Panc1 (cell line): ENCODE measurements at regions of chr11 and their contacts with region 1.

Region 1: GRCh38 chr11:93080146-93080759 is 110.8 kb downstream of the MTNR1B start:
- DNase-seq: no peak
- ATAC-seq: no peak
- H3K4me3 ChIP-seq: no peak overlapping the region
- H3K27ac ChIP-seq: no peak overlapping the region
- H3K4me1 ChIP-seq: no peaks in the 10 kb centered on the region
- H3K27me3 ChIP-seq: 0 out of 2 replicates have a peak, but pooled peaks cover 4% of the 10 kb centered on the region
- CTCF ChIP-seq: no peak

Region 2: DNA sequence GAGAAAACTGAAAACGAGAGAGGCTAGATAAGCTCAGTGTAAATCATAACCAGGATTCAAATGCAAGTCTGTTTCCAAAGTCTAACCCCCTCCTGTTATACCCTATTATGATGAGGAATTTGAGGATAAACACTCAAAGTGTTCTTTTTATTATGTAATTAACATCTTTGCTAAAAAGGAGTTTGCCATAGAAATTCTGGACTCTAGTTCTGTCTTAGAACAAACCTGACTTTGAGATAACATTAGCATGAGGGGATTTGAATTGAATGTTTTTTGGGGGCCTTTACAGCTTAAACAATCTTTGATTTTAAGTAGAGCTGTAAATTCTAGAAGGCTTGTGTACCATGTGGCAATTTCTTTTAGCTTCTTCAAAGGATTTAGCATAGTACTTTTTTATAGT is 670.7 kb after region 1 on chr11:
- CTCF ChIA-PET with region 1: no interaction called
- POLR2A ChIA-PET with region 1: interaction called, 12 read pairs
- in situ Hi-C with region 1: no loop called
- intact Hi-C with region 1: no loop called
- DNase-seq: no peak
- ATAC-seq: no peak
- H3K4me3 ChIP-seq: no peak overlapping the region
- H3K27ac ChIP-seq: no peak overlapping the region
- H3K4me1 ChIP-seq: no peaks in the 10 kb centered on the region; the same call in 1 of the 2 replicates
- H3K27me3 ChIP-seq: no peaks in the 10 kb centered on the region
- CTCF ChIP-seq: no peak